ENCODE measurements at regions of chr2 and their contacts with region 1.

Region 1: GRCh38 chr2:70094978-70095719 is 7.9 kb downstream of the PCBP1 start:
- DNase-seq: peak; percentile 67
- ATAC-seq: peak; percentile 86
- H3K4me3 ChIP-seq: no peak overlapping the region
- H3K27ac ChIP-seq: peak overlapping the region; percentile 84
- H3K4me1 ChIP-seq: peaks cover 12% of the 10 kb centered on the region
- H3K27me3 ChIP-seq: no peaks in the 10 kb centered on the region
- CTCF ChIP-seq: no peak
- POLR2A ChIP-seq: no peak
- RAD21 ChIP-seq: no peak

Region 2: DNA sequence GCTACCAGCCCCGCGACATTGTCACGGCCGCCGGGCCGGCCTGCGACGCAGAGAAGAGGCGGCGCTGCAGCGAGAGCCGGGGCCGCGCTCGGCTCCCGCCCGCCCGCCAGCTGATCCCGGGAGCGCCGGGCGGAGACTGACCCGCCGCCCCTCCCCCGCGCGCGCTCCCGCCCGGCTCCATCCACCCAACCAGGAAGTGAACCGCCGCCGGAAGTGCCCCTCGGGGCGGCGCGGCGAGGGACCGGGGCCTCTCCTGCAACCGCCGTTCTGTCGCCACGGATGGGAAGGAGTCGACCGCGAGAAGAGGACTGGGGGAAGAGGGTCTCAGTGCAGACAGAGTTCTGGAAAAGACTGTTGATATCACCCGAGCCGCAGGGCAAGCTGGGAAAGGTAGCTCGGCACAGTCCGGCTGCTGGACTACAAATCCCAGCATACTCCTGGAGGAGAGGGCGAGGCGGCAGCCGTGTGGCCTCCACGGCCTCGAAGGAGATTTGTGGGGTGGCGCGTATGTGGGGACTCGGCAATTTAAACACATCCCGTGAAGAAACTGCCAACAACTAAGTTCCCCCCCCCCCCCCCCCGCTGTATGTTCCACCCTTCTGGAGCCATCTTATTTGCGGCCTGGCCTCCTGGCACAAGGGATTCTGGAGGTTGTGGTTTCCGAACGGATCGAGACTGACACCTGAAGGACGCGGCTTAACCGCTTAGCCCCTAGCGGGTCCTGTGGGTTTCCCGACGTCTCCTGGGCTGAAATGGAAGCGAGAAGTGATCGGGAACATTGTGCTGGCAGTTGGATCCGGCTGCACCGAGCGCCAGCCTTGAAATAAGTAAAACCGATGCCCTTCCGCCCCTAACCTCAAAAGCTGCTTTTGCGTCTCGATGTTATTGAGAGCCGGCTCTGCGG is 451.3 kb before region 1 on chr2 and contains the start of gene AAK1:
- CTCF ChIA-PET with region 1: no interaction called
- POLR2A ChIA-PET with region 1: no interaction called
- dilution Hi-C with region 1: no loop called
- in situ Hi-C with region 1: no loop called
- intact Hi-C with region 1: no loop called
- DNase-seq: peak; percentile 79
- ATAC-seq: peak; percentile 85
- H3K4me3 ChIP-seq: peak within 1 kb of the TSS; percentile 90
- H3K27ac ChIP-seq: peak within 1 kb of the TSS; percentile 97
- H3K4me1 ChIP-seq: peaks cover 17% of the 10 kb centered on the region
- H3K27me3 ChIP-seq: no peaks in the 10 kb centered on the region
- CTCF ChIP-seq: no peak
- POLR2A ChIP-seq: peak; percentile 71
- RAD21 ChIP-seq: no peak
- total RNA-seq, gene AAK1: 26.5 and 34.7 TPM in 2 replicates

Region 3: GRCh38 chr2:69997015-69997830 is 97.9 kb before region 1 on chr2:
- CTCF ChIA-PET with region 1: no interaction called
- POLR2A ChIA-PET with region 1: no interaction called
- dilution Hi-C with region 1: no loop called
- in situ Hi-C with region 1: no loop called
- intact Hi-C with region 1: no loop called
- DNase-seq: peak; percentile 71
- ATAC-seq: peak; percentile 63
- H3K4me3 ChIP-seq: no peak overlapping the region
- H3K27ac ChIP-seq: no peak overlapping the region
- H3K4me1 ChIP-seq: peaks cover 5% of the 10 kb centered on the region
- H3K27me3 ChIP-seq: no peaks in the 10 kb centered on the region
- CTCF ChIP-seq: no peak
- POLR2A ChIP-seq: no peak
- RAD21 ChIP-seq: no peak

Region 4: DNA sequence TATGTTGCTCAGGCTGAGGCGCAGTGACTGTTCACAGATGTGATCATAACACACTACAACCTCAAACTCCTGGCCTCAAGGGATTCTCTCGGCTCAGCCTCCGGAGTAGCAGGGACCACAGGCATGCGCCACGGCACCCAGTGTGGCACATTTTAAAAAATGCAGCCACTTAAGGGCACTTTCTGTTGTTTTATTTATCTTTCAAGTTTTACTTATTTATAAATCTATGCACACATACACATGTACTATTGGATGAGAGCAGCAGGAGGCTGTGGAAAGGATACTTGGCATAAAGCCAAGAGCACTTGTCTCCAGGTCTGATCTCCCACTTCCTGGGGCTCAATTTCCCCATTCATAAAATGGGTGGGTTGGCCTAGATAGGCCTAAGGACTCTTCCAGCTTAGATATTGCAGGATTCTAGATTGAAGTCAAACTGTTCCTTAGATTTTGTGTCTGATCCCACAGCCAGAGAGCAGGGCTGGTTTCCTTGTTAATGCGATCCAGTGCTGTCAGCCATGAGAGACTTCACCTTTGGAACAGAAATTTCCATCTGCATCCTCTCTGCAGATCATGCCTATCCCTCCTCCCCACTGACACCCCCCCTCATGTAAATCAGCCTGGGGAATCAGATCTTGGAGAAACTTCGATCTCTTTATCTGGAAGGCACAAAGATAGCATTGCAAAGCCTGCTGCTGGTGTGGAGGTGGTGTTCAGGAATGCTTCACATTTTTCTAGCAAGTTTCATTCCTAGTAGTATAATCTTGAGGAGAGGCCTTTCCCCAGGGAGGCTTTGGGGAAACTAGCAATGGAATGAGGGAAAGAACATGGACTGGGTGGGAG is 16.8 kb after region 1 on chr2:
- CTCF ChIA-PET with region 1: no interaction called
- POLR2A ChIA-PET with region 1: interaction called, 3 read pairs
- dilution Hi-C with region 1: no loop called
- in situ Hi-C with region 1: no loop called
- intact Hi-C with region 1: loop called (anchors 2 kb)
- DNase-seq: peak; percentile 71
- ATAC-seq: peak; percentile 90
- H3K4me3 ChIP-seq: no peak overlapping the region
- H3K27ac ChIP-seq: peak overlapping the region; percentile 67
- H3K4me1 ChIP-seq: peaks cover 26% of the 10 kb centered on the region
- H3K27me3 ChIP-seq: no peaks in the 10 kb centered on the region
- CTCF ChIP-seq: no peak
- POLR2A ChIP-seq: no peak
- RAD21 ChIP-seq: no peak

Region 5: DNA sequence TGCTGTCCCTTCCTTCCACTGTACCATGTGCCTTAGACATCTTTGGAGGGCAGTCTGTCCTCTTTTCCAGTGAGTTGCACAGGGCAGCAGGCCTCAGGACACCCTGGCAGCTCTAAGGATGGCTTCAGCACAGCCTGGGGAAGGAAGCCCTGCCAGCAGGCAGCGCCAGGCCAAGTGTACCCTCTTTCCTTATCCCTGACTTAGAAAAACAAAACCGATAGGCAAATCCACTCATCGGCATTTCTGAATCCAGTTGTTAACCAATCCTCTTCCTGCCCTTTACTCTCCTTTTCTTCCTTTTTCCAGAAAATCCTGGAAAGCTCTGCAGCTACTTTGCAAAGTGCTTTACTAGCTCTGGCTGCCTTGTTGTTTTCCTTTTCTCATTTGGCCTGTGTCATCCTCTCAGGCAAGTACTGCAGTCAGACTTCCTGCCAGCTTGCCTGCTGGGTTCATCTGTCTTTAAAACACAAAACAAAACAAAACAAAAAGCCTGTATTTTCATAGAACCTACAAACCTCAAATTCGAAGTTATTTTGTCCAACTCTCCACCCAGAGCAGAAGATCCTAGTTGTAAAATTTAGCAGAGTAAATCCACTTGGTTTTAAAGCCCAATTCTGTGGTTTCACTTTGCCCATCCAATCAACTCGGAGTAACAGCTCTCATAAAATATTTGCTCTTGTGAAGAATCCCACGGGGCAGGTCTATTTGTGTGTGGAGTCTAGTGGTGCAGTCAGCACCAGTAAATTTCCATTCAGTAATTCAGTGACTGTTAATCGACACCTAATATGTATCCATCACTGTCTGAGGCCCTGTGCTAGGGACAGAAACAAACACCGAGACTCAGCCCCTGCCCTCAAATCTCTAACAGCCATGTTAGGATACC is 37.3 kb after region 1 on chr2:
- CTCF ChIA-PET with region 1: interaction called, 4 read pairs
- POLR2A ChIA-PET with region 1: interaction called, 7 read pairs
- dilution Hi-C with region 1: no loop called
- in situ Hi-C with region 1: loop called (anchors 5 kb)
- intact Hi-C with region 1: no loop called
- DNase-seq: peak; percentile 63
- ATAC-seq: peak; percentile 63
- H3K4me3 ChIP-seq: peak overlapping the region; percentile 18; the same call in 1 of the 2 replicates
- H3K27ac ChIP-seq: peak overlapping the region; percentile 79
- H3K4me1 ChIP-seq: peaks cover 8% of the 10 kb centered on the region
- H3K27me3 ChIP-seq: no peaks in the 10 kb centered on the region
- CTCF ChIP-seq: no peak
- POLR2A ChIP-seq: no peak
- RAD21 ChIP-seq: no peak